ENCODE measurements at regions of chr3 and their contacts with region 1.

Region 1: DNA sequence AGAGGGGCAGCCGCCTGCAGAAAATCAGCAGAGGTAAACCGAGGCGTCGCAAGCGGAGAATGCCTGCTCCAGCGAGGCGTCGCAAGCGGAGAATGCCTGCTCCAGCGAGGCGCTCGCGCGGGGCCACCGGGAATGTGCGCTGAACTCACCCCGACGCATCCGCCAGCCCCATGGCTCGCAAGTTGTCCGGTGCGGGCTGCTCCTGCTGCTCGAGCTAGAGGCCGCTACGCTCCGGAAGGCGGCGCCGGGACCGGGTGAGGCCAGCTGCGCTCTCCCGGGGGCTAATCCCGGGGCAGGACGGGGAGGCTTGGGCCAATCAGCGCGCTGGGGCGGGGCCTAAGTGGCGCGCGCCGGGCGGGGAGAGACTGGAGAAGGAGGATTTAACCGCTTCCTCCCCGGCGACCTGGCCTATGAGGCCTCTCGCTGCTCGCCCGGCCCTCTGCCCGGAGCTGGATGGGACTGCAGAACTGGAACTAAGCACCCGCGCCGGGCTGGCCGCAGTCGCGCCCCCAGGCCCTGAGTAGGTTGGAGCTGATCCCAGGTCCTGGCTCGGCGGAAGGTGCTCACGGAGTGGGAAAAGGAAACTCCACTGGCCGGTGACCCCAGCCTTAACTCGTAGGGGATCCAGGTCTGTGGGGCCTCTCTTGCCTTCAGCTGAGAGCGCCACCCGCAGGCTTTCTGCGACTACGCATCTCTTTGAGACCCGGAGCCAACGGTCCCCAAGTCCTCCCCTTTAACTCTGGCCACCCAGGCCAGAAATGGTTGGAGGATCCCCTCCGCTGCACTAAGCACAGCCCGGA is at the start of gene SLC26A6:
- DNase-seq: peak; percentile 96
- H3K4me3 Mint-ChIP-seq: peak within 1 kb of the TSS; percentile 91
- H3K27ac Mint-ChIP-seq: peak within 1 kb of the TSS; percentile 87
- H3K4me1 Mint-ChIP-seq: peaks cover 31% of the 10 kb centered on the region
- H3K27me3 Mint-ChIP-seq: no peaks in the 10 kb centered on the region
- total RNA-seq, gene SLC26A6: 55.4 to 56.0 TPM

Region 2: DNA sequence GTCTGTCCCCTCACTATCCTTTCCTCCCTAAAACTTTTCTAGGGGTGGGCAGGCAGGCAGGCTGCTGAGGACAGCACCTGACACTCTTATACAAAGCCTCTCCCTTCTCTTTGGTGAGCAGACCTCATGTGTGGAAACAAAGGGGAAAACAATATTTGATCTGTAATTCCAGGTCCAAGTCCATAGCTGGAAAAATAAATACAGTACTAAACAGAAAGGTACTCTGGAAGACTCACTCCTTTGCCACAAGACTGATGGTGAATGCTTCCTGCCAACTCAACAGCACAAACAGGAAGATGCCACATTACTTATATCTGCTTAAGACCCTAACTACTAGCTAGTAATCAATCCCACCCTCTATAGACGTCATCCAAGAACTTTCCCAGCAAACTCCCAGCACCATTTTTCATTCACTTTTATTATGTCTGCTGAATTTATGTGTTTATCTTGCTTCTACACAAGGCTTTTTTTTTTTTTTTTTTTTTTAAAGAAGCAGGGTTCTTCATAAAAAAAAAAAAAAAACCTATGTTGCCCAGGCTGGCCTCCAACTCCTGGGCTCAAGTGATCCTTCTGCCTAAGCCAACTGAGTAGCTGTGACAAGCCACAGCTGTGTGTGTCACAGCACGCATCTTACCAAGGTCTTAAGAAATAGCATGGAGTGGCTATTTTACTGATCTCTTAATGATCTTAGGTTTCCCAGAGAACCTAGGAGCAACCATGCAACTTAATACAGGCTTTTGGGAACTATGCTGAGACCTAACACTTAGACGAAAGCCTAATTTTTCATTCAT is 1012.6 kb before region 1 on chr3:
- CTCF ChIA-PET with region 1: no interaction called
- POLR2A ChIA-PET with region 1: no interaction called
- DNase-seq: no peak
- H3K4me3 Mint-ChIP-seq: no peak overlapping the region
- H3K27ac Mint-ChIP-seq: no peak overlapping the region
- H3K4me1 Mint-ChIP-seq: peaks cover 10% of the 10 kb centered on the region
- H3K27me3 Mint-ChIP-seq: no peaks in the 10 kb centered on the region

Region 3: GRCh38 chr3:48301020-48301796 is 334.2 kb before region 1 on chr3:
- CTCF ChIA-PET with region 1: no interaction called
- POLR2A ChIA-PET with region 1: no interaction called
- DNase-seq: peak; percentile 92
- H3K4me3 Mint-ChIP-seq: peak within 1 kb of the TSS; percentile 94
- H3K27ac Mint-ChIP-seq: peak within 1 kb of the TSS; percentile 97
- H3K4me1 Mint-ChIP-seq: peaks cover 37% of the 10 kb centered on the region
- H3K27me3 Mint-ChIP-seq: peaks cover 2% of the 10 kb centered on the region

Region 4: GRCh38 chr3:48465531-48466378 is 169.7 kb before region 1 on chr3:
- CTCF ChIA-PET with region 1: no interaction called
- POLR2A ChIA-PET with region 1: interaction called, 10 read pairs
- DNase-seq: peak; percentile 87
- H3K4me3 Mint-ChIP-seq: peak overlapping the region; percentile 95
- H3K27ac Mint-ChIP-seq: peak overlapping the region; percentile 94
- H3K4me1 Mint-ChIP-seq: peaks cover 56% of the 10 kb centered on the region
- H3K27me3 Mint-ChIP-seq: no peaks in the 10 kb centered on the region

Region 5: GRCh38 chr3:48609088-48610005 is 26.1 kb before region 1 on chr3 and contains the start of gene UQCRC1:
- CTCF ChIA-PET with region 1: interaction called, 27 read pairs
- POLR2A ChIA-PET with region 1: interaction called, 9 read pairs
- DNase-seq: peak; percentile 94
- H3K4me3 Mint-ChIP-seq: peak within 1 kb of the TSS; percentile 99
- H3K27ac Mint-ChIP-seq: peak within 1 kb of the TSS; percentile 95
- H3K4me1 Mint-ChIP-seq: peaks cover 31% of the 10 kb centered on the region
- H3K27me3 Mint-ChIP-seq: no peaks in the 10 kb centered on the region
- total RNA-seq, gene UQCRC1: 167 to 170 TPM

Region 6: DNA sequence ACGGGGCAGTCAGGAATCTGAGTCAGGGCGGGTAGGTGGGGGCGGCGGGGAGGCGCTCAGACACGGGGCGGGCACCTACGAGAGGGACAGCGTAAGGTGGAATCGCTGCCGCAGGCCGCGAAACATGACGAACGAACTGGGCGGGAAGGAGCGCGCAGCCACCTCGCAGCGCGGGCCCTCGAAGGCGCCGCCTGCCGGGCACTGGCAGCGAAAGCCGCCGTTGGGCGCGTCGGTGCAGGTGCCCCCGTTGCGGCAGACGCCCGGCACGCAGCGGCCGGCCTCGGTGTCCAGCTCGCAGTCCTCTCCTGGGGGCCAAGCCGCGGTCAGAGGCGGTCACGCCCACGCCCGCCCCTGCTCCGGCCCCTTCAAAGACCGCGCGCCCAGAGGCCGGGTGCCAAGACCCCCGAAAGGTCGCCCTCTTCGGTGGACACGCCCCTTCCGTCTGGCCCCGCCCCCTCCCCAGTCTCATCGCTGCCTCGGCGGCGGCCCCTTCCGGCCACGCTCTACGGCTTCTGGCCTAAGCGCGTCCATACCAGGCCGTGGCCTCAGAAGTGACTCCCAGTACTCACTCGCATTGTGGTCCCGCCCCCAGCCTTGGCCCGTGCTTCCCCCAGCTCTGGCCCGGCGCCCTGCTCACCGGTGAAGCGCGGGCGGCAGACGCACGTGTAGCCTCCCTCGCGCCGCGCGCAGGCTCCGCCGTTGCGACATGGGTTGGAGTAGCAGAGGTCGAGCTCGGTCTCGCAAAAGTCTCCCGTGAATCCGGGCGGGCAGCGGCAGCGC is 20.8 kb after region 1 on chr3:
- CTCF ChIA-PET with region 1: interaction called, 19 read pairs
- POLR2A ChIA-PET with region 1: interaction called, 25 read pairs
- DNase-seq: peak; percentile 88
- H3K4me3 Mint-ChIP-seq: peak overlapping the region; percentile 70
- H3K27ac Mint-ChIP-seq: peak overlapping the region; percentile 78
- H3K4me1 Mint-ChIP-seq: peaks cover 27% of the 10 kb centered on the region
- H3K27me3 Mint-ChIP-seq: no peaks in the 10 kb centered on the region

Region 7: DNA sequence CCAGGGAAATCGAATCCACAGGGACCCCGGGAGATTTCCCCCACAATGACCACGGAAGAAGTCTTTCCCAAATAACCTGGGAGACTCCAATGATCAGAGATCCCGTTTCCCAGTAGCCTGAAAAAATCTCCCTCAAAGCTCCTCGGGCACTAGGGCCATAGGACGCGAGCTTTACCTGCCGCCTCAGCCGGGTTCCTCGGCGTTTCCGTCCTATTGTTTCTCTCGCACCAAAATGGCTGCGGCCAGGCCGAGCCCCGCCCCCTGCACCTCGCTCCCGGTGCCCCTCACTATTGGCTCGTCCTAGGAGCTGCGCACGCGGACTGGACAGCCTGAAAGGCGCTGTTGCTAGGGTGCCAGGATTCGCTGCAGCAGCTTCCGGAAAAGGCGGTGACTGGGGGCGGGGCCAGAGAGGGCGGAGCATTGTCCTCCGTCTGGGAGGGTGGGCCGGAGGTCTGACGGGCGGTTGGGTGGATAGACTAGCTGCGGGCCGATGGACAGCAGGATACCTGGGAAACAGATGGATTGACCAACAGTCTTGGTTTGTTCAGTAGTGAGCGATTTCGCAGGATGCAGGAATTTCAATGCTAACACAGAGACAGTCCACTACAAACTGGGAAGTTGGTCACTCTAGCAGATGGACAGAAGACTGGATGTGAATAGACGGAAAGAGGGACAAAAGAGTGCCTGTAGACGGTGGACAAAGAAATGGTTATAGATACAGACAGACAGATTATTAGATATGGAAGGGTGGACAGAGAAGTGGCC is 81.7 kb after region 1 on chr3 and contains the start of gene IP6K2:
- CTCF ChIA-PET with region 1: no interaction called
- POLR2A ChIA-PET with region 1: interaction called, 15 read pairs
- DNase-seq: peak; percentile 99
- H3K4me3 Mint-ChIP-seq: peak within 1 kb of the TSS; percentile 100
- H3K27ac Mint-ChIP-seq: peak within 1 kb of the TSS; percentile 96
- H3K4me1 Mint-ChIP-seq: peaks cover 44% of the 10 kb centered on the region
- H3K27me3 Mint-ChIP-seq: peaks cover 19% of the 10 kb centered on the region
- total RNA-seq, gene IP6K2: 52.7 to 57.8 TPM

Measured in activated CD4-positive, alpha-beta memory T cell treated with anti-CD3 and anti-CD28 coated beads, Interleukin-2, amount 10 ng/mL, durations not matched to agents 7 days and 5 days (primary cell).